ENCODE measurements at regions of chr2 and their contacts with region 1.

Region 1: DNA sequence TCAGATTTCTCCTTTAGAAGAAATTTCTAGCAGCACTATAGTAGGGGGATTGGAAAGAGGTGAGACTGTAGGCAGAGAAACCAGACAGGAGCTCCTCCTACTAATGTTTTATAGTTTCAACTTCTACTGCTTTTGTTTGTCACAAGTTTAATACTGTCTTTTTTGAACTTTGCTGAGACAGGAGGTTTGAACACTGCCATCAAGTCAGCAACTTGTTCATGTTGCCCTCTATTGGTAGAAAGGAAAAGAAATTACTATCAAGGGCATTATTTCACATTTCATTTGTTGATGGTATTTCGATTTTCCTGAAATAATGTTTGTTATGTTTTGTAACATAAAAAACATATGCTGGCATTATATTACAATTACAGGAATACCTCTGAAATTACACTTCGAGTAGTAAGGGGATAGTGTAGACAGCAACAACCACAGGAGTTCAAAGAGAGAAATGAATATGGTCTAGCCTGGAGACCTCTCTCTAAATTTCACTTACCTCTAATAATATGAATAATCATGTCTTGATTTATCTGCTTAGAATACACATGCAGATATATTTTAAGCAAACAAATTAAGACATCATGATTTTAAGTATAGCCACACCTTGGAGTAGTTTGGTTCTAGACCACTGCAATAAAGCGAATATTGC is 12.4 kb upstream of the CCDC88A start:
- DNase-seq: no peak
- ATAC-seq: peak in 3 of 4 donors; percentile 75 to 86 (median 83)
- H3K4me3 ChIP-seq: no peak overlapping the region
- H3K27ac ChIP-seq: no peak overlapping the region
- H3K4me1 ChIP-seq: no peaks in the 10 kb centered on the region
- H3K27me3 ChIP-seq: no peaks in the 10 kb centered on the region
- CTCF ChIP-seq: peak; percentile 9 to 52 (median 39)

Region 2: DNA sequence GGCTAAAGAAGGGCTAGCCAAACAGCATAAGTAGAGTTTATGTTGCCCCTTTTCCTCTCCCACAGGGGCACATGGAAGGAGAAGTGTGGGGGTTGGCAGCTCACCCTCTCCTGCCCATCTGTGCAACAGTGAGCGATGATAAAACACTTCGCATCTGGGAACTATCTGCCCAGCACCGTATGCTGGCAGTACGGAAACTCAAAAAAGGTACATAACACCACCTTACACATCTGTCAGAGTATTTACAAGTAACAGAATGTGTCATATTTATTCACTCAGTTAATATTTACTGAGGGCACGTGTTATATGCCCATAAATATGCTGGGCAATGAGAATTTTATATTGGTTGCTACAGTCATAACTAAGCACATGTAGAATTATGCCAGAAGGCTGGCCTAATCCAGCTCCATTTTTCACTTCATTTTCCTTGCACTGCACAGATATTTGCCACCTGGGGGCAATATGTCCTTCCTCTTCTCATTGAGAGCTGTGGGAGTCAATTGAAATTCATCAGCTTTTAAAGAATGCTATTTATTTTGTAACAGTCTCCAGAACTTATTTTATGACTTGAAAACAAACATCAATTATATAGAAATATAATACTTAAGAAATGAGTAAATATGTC is 532.4 kb before region 1 on chr2:
- intact Hi-C with region 1: no loop called
- DNase-seq: peak in 2 of 6 donors; percentile 19 to 34
- ATAC-seq: peak; percentile 73 to 90 (median 88)
- H3K4me3 ChIP-seq: no peak overlapping the region
- H3K27ac ChIP-seq: no peak overlapping the region
- H3K4me1 ChIP-seq: no peaks in the 10 kb centered on the region
- H3K27me3 ChIP-seq: no peaks in the 10 kb centered on the region
- CTCF ChIP-seq: peak in 3 of 4 donors; percentile 38 to 51 (median 41)

Region 3: DNA sequence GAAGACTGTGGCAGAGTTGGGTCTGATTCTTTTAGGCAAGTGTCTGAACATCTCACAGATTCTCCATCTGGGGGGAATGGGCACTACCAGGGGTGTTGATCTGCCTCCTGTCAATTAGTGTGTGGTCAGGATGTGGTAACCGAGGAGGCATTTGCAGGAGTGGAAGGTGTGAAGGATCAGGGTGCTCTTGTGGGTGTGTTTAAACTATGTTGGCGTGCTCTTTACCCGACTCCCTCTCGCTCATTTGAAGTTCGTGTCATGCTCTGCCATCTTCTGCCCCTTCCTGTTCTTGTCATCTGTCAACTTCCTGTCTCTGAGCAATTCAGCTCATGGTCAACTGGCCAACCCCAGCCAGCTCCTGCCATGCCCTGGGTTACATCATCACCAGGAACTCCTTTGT is 489.7 kb before region 1 on chr2:
- intact Hi-C with region 1: no loop called
- DNase-seq: no peak
- ATAC-seq: no peak
- H3K4me3 ChIP-seq: no peak overlapping the region
- H3K27ac ChIP-seq: no peak overlapping the region
- H3K4me1 ChIP-seq: no peaks in the 10 kb centered on the region
- H3K27me3 ChIP-seq: no peaks in the 10 kb centered on the region
- CTCF ChIP-seq: no peak

Region 4: GRCh38 chr2:55277310-55277709 is 154.8 kb before region 1 on chr2:
- intact Hi-C with region 1: loop called in 1 of 3 experiments (anchors 10 kb)
- DNase-seq: no peak
- ATAC-seq: no peak
- H3K4me3 ChIP-seq: no peak overlapping the region
- H3K27ac ChIP-seq: no peak overlapping the region
- H3K4me1 ChIP-seq: peaks cover 0 to 4% (median 0%) of the 10 kb centered on the region in 3 donors
- H3K27me3 ChIP-seq: no peaks in the 10 kb centered on the region
- CTCF ChIP-seq: no peak

Region 5: DNA sequence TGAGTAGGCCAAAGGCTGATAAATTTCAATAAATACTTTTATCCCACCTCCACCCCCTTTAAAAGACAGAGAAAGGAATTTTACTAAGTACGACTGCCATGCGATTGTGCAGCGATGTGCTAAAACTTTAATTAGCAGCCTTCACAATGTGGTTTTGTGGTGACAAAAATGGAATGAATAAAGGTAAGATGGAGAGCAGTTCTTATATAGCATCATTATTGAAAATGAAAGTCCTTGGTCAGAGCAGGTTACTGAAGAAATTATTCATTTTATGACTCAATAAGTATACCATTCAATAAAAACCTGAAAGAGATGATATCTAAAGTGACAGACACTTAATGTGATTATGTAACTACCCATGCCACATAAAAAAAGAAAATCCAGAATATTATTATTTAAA is 129.9 kb before region 1 on chr2:
- intact Hi-C with region 1: no loop called
- DNase-seq: no peak
- ATAC-seq: no peak
- H3K4me3 ChIP-seq: no peak overlapping the region
- H3K27ac ChIP-seq: no peak overlapping the region
- H3K4me1 ChIP-seq: no peaks in the 10 kb centered on the region
- H3K27me3 ChIP-seq: no peaks in the 10 kb centered on the region
- CTCF ChIP-seq: no peak